Naive thymus-derived CD4-positive, alpha-beta T cell (primary cell): ENCODE measurements at regions of chr6 and their contacts with region 1.

Region 1: DNA sequence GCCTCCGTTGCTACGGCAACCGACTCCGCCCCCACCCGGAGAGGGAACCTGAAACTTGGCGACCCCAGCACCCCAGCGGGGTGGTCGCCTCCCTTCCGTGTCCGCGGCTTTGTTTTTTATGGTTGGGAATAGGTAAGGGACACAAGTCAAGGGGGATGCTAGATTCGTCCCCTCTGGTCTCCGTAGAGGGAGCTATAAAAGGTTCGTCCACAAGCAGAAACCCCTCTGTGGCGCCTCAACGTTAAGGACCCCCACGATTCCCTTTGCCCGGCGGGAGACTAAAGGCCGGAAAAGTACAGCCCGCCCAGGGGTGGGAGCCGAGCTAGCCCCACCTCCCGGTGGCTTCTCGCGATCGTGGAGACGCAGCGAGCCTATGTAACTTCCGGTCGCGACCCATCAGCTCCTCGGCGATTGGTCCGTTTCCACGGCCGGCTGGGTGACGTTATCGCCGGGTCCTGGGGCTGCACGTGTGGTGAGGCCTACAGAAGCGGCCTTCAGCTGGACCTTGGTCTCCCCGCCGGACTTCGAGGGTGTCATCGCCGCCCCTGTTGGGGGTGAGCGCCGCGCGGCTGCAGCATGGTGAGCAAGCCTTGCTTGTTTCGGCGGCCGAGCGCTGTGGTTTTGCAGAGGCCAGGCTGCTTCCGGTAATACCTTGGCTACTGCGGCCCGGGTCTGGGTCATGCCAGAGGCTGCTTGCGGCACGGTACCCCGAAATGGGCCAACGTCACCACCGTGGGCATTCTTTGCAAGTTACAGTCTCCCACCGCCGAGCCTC is at the start of gene LTV1:
- DNase-seq: peak; percentile 82 to 90 (median 88)
- ATAC-seq: peak; percentile 98
- H3K4me3 ChIP-seq: peak within 1 kb of the TSS; percentile 99
- H3K4me3 Mint-ChIP-seq: peak within 1 kb of the TSS; percentile 93 to 99 (median 96)
- H3K27ac ChIP-seq: peak within 1 kb of the TSS; percentile 92
- H3K27ac Mint-ChIP-seq: peak within 1 kb of the TSS; percentile 91 to 99 (median 97)
- H3K4me1 ChIP-seq: peaks cover 6 to 11% of the 10 kb centered on the region in 2 donors
- H3K4me1 Mint-ChIP-seq: peaks cover 19 to 42% (median 32%) of the 10 kb centered on the region in 7 donors
- H3K27me3 ChIP-seq: no peaks in the 10 kb centered on the region
- H3K27me3 Mint-ChIP-seq: no peaks in the 10 kb centered on the region
- total RNA-seq, gene LTV1: 16.5 to 29.6 (median 22.6) TPM

Region 2: GRCh38 chr6:143510991-143511891 is 331.8 kb before region 1 on chr6 and contains the start of gene FUCA2:
- CTCF ChIA-PET with region 1: no interaction called
- POLR2A ChIA-PET with region 1: interaction called, 4 read pairs
- intact Hi-C with region 1: loop called (anchors 2 to 5 kb)
- DNase-seq: peak; percentile 35 to 72 (median 63)
- ATAC-seq: peak; percentile 82
- H3K4me3 ChIP-seq: peak within 1 kb of the TSS; percentile 74
- H3K4me3 Mint-ChIP-seq: peak within 1 kb of the TSS; percentile 87 to 97 (median 92)
- H3K27ac ChIP-seq: peak within 1 kb of the TSS; percentile 69
- H3K27ac Mint-ChIP-seq: peak within 1 kb of the TSS; percentile 79 to 97 (median 89)
- H3K4me1 ChIP-seq: peaks cover 0 to 4% of the 10 kb centered on the region in 2 donors
- H3K4me1 Mint-ChIP-seq: peaks cover 14 to 43% (median 19%) of the 10 kb centered on the region in 7 donors
- H3K27me3 ChIP-seq: no peaks in the 10 kb centered on the region
- H3K27me3 Mint-ChIP-seq: no peaks in the 10 kb centered on the region
- total RNA-seq, gene FUCA2: 5.3 to 14.9 (median 6.7) TPM

Region 3: GRCh38 chr6:143598466-143599080 is 244.5 kb before region 1 on chr6:
- CTCF ChIA-PET with region 1: no interaction called
- POLR2A ChIA-PET with region 1: no interaction called
- intact Hi-C with region 1: loop called in 1 of 2 experiments (anchors 2 kb)
- DNase-seq: peak in 1 of 9 donors; percentile 3
- ATAC-seq: peak; percentile 72
- H3K4me3 ChIP-seq: no peak overlapping the region
- H3K4me3 Mint-ChIP-seq: peak overlapping the region in 4 of 10 donors; percentile 16 to 36 (median 27)
- H3K27ac ChIP-seq: no peak overlapping the region
- H3K27ac Mint-ChIP-seq: peak overlapping the region in 1 of 9 donors; percentile 70
- H3K4me1 ChIP-seq: peaks cover 0 to 6% of the 10 kb centered on the region in 2 donors
- H3K4me1 Mint-ChIP-seq: peaks cover 13 to 24% (median 16%) of the 10 kb centered on the region in 7 donors
- H3K27me3 ChIP-seq: no peaks in the 10 kb centered on the region
- H3K27me3 Mint-ChIP-seq: no peaks in the 10 kb centered on the region

Region 4: GRCh38 chr6:143755301-143755744 is 87.8 kb before region 1 on chr6:
- CTCF ChIA-PET with region 1: no interaction called
- POLR2A ChIA-PET with region 1: no interaction called
- intact Hi-C with region 1: no loop called
- DNase-seq: no peak
- ATAC-seq: no peak
- H3K4me3 ChIP-seq: no peak overlapping the region
- H3K4me3 Mint-ChIP-seq: no peak overlapping the region
- H3K27ac ChIP-seq: no peak overlapping the region
- H3K27ac Mint-ChIP-seq: no peak overlapping the region
- H3K4me1 ChIP-seq: no peaks in the 10 kb centered on the region
- H3K4me1 Mint-ChIP-seq: peaks cover 7 to 36% (median 26%) of the 10 kb centered on the region in 7 donors
- H3K27me3 ChIP-seq: no peaks in the 10 kb centered on the region
- H3K27me3 Mint-ChIP-seq: no peaks in the 10 kb centered on the region

Region 5: GRCh38 chr6:144008120-144008811 is 165.2 kb after region 1 on chr6 and contains the start of gene PLAGL1:
- CTCF ChIA-PET with region 1: no interaction called
- POLR2A ChIA-PET with region 1: no interaction called
- intact Hi-C with region 1: loop called in 1 of 2 experiments (anchors 10 kb)
- DNase-seq: peak in 5 of 9 donors; percentile 1 to 40 (median 10)
- ATAC-seq: peak; percentile 81
- H3K4me3 ChIP-seq: no peak within 1 kb of the TSS
- H3K4me3 Mint-ChIP-seq: peak within 1 kb of the TSS; percentile 48 to 79 (median 64)
- H3K27ac ChIP-seq: no peak within 1 kb of the TSS
- H3K27ac Mint-ChIP-seq: no peak within 1 kb of the TSS
- H3K4me1 ChIP-seq: no peaks in the 10 kb centered on the region
- H3K4me1 Mint-ChIP-seq: peaks cover 0 to 11% (median 4%) of the 10 kb centered on the region in 7 donors
- H3K27me3 ChIP-seq: peaks cover 0 to 6% of the 10 kb centered on the region in 2 donors
- H3K27me3 Mint-ChIP-seq: peaks cover 12 to 53% (median 29%) of the 10 kb centered on the region in 5 donors
- total RNA-seq, gene PLAGL1: 4.0 to 11.2 (median 4.5) TPM

Region 6: GRCh38 chr6:144149891-144150709 is 307.0 kb after region 1 on chr6 and contains the start of gene STX11:
- CTCF ChIA-PET with region 1: no interaction called
- POLR2A ChIA-PET with region 1: no interaction called
- intact Hi-C with region 1: loop called (anchors 2 kb)
- DNase-seq: peak; percentile 37 to 88 (median 51)
- ATAC-seq: peak; percentile 86
- H3K4me3 ChIP-seq: peak within 1 kb of the TSS; percentile 69
- H3K4me3 Mint-ChIP-seq: peak within 1 kb of the TSS; percentile 91 to 98 (median 95)
- H3K27ac ChIP-seq: peak within 1 kb of the TSS; percentile 62
- H3K27ac Mint-ChIP-seq: peak within 1 kb of the TSS; percentile 89 to 98 (median 94)
- H3K4me1 ChIP-seq: peaks cover 0 to 17% of the 10 kb centered on the region in 2 donors
- H3K4me1 Mint-ChIP-seq: peaks cover 6 to 43% (median 15%) of the 10 kb centered on the region in 7 donors
- H3K27me3 ChIP-seq: no peaks in the 10 kb centered on the region
- H3K27me3 Mint-ChIP-seq: peaks cover 0 to 2% (median 0%) of the 10 kb centered on the region in 5 donors
- total RNA-seq, gene STX11: 2.6 to 60.5 (median 11.6) TPM